AG04449 (cell line): ENCODE measurements at regions of chr11 and their contacts with region 1.

Region 1: GRCh38 chr11:62787005-62787759 is at the start of gene TMEM179B:
- DNase-seq: peak; percentile 86
- H3K4me3 ChIP-seq: peak within 1 kb of the TSS; percentile 95
- CTCF ChIP-seq: peak; percentile 62

Region 2: GRCh38 chr11:62726915-62727763 is 60.0 kb before region 1 on chr11 and contains the start of gene HNRNPUL2:
- CTCF ChIA-PET with region 1: interaction called, 17 read pairs
- POLR2A ChIA-PET with region 1: interaction called, 8 read pairs
- DNase-seq: peak; percentile 92
- H3K4me3 ChIP-seq: peak within 1 kb of the TSS; percentile 96
- CTCF ChIP-seq: peak; percentile 4

Region 3: GRCh38 chr11:62753736-62754603 is 33.2 kb before region 1 on chr11 and contains the start of gene ZBTB3:
- CTCF ChIA-PET with region 1: interaction called, 17 read pairs
- POLR2A ChIA-PET with region 1: interaction called, 14 read pairs
- DNase-seq: peak; percentile 93
- H3K4me3 ChIP-seq: peak within 1 kb of the TSS; percentile 75
- CTCF ChIP-seq: no peak

Region 4: DNA sequence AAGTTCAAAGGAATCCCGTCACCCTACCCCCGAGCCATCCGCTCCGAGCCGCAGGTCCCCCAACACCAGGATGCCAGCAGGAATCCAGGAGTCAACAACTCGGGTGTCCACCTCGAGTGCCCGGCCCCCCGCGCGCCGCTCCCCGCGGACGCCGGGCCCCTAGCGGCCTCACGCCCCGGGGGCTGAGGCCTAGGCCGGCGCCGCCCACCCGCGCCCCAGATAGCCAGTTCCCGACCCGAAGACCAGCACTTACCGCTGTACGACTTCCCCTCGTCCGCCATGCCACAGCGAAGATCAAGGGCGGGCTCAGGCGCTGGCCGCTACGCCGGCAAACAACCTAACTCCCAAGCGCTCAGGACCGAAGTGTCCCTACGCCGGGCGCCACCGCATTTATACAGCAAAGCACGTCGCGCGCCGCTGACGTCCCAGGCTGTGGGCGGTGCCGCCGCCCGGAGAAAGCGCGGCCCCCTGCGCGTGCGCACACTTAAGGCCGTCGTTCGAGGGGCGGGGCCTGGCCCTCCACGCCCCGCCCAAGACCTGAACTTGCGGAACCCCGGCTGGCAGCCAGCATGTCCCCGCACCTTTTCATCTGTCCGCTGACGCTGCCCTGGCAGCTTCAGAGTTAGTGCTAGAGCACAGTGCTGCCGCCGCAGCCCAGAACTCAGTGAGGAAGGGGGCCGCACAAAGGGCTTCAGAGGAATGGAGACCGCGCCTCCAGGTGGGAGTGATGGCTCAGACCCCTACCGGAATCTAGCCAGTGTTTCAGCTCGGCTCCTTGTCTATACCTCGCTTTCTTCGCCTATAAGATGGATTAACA is 18.1 kb after region 1 on chr11 and contains the start of gene NXF1:
- CTCF ChIA-PET with region 1: interaction called, 49 read pairs
- POLR2A ChIA-PET with region 1: interaction called, 4 read pairs
- DNase-seq: peak; percentile 50
- H3K4me3 ChIP-seq: peak within 1 kb of the TSS; percentile 81
- CTCF ChIP-seq: no peak

Region 5: DNA sequence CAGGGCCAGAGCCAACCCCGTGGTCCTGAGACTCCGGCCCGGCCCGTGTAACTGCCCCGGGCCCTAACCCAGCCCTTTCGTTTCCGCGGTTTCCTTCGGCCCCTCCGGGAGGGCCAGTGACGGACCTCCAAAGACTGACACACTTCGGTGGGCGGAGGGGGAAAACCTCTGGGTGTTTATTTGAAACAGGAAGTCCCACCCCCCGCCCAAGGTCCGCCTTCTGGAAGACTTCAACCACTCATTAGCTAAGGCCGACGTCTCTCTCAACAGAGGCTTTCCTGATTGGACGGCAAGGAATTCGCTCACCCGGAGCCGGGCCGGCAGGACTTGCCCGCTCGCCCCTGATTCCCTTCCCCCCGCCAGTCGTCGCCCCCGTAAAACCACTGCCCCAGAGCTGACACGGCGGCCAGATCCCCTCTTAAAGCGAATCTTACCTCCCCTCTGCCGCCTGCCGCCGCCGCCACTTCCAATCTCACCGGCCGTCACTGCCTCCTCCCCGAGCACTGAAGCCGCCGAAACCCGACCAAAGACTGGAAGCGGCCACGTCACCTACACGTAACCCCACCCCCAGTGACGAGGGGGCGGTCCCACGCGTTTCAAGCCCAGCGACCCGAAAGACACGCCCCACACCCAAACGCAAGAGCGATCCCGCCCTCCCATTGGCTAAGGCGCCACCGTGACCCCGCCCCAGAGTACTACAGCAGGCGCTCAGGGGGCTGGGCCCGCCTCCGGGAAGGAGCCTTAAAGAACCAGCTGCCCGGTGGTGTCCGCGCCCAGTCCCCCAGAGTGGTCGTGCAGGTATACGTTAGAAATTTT is 44.5 kb after region 1 on chr11 and contains the start of gene STX5:
- CTCF ChIA-PET with region 1: interaction called, 19 read pairs
- POLR2A ChIA-PET with region 1: interaction called, 7 read pairs
- DNase-seq: peak; percentile 95
- H3K4me3 ChIP-seq: peak within 1 kb of the TSS; percentile 85
- CTCF ChIP-seq: no peak

Region 6: GRCh38 chr11:62855571-62856332 is 68.6 kb after region 1 on chr11:
- CTCF ChIA-PET with region 1: interaction called, 70 read pairs
- POLR2A ChIA-PET with region 1: interaction called, 10 read pairs
- DNase-seq: peak; percentile 82
- H3K4me3 ChIP-seq: peak overlapping the region; percentile 92
- CTCF ChIP-seq: no peak

Region 7: GRCh38 chr11:62931499-62932278 is 144.5 kb after region 1 on chr11:
- CTCF ChIA-PET with region 1: no interaction called
- POLR2A ChIA-PET with region 1: no interaction called
- DNase-seq: no peak
- H3K4me3 ChIP-seq: no peak overlapping the region
- CTCF ChIP-seq: no peak